Heart right ventricle (tissue), 16 donors: ENCODE measurements at regions of chr11 and their contacts with region 1.

Region 1: GRCh38 chr11:19915808-19916207 is 203.2 kb downstream of the NAV2 start:
- DNase-seq: no peak
- ATAC-seq: no peak
- H3K4me3 ChIP-seq: no peak overlapping the region
- H3K27ac ChIP-seq: no peak overlapping the region
- H3K4me1 ChIP-seq: peaks cover 0 to 46% (median 20%) of the 10 kb centered on the region in 9 donors
- H3K27me3 ChIP-seq: no peaks in the 10 kb centered on the region
- CTCF ChIP-seq: no peak

Region 2: DNA sequence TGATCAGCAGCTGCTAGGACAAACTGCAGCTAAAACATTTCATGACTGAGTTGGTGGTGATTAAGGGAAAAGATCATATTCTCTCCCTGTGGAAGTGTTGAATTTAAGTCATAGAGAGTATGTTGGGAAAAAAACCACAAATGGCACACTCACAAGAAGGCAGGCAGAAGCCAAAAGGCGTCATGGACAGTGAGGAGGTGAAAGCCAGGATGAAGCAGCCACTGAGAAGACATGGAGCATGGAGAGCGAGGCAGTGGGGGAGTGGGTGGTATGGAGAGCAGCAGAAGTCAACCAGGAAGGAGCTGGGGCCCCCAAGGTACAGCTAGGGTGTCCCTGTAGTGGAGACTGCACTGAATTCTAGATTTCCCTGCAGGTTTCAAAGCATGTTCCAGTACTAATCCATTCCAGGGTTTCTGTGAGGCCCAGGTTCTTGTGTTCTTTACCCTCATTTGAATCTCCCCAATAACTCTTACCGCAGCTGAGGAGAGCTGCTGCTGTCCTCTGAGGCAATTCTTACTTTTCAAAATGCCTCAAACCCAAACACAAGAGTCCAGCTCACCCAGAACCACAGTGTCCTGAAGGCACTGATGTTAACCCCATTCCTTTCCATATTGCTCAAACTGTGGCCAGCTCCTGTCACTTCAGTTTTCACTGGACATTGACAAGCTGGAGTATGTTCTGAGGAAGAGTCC is 483.3 kb before region 1 on chr11:
- intact Hi-C with region 1: no loop called
- DNase-seq: no peak
- ATAC-seq: peak in 4 of 8 donors; percentile 18 to 67 (median 24)
- H3K4me3 ChIP-seq: no peak overlapping the region
- H3K27ac ChIP-seq: peak overlapping the region in 2 of 10 donors; percentile 12 to 64
- H3K4me1 ChIP-seq: peaks cover 0 to 28% (median 0%) of the 10 kb centered on the region in 9 donors
- H3K27me3 ChIP-seq: peaks cover 0 to 16% (median 7%) of the 10 kb centered on the region in 7 donors
- CTCF ChIP-seq: no peak

Region 3: DNA sequence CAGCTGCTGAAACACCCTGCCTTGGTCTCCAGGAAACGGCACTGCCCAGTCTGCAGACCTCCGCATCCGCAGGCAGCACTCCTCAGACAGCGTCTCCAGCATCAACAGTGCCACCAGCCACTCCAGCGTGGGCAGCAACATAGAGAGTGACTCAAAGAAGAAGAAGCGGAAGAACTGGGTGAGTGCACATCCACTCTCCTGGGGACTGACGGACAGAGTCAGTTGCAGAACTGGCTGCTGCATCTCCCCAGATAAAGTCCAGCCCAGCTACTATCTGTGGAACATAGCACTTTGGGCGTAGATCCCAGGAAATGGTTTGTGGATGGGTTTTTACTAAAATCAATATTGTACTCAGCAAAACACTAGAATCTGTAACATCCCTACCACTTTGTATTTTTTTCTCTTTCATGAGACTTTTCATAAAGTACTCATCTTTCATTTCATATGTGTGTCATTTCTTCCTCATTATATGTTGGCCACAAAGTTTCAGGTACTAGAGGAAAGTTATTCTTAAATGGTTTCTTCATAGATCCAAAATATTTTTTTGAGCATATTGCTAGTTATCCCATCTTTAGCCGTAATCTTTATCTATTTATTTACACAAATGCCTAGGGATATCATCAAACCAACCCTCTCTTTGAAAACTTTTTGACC is 164.4 kb after region 1 on chr11:
- intact Hi-C with region 1: loop called in 1 of 10 experiments (anchors 1 kb)
- DNase-seq: no peak
- ATAC-seq: no peak
- H3K4me3 ChIP-seq: no peak overlapping the region
- H3K27ac ChIP-seq: no peak overlapping the region
- H3K4me1 ChIP-seq: peaks cover 0 to 6% (median 0%) of the 10 kb centered on the region in 9 donors
- H3K27me3 ChIP-seq: no peaks in the 10 kb centered on the region
- CTCF ChIP-seq: no peak